ENCODE measurements at regions of chrX and their contacts with region 1.

Region 1: GRCh38 chrX:47836164-47837072 is at the start of gene ZNF81:
- DNase-seq: peak; percentile 94 to 95 (median 95)
- H3K4me3 ChIP-seq: peak within 1 kb of the TSS; percentile 71 to 79 (median 71)
- H3K4me3 Mint-ChIP-seq: peak within 1 kb of the TSS; percentile 98 to 99
- H3K27ac ChIP-seq: peak within 1 kb of the TSS; percentile 57 to 83
- H3K27ac Mint-ChIP-seq: peak within 1 kb of the TSS; percentile 88 to 95 (median 93)
- H3K4me1 ChIP-seq: peaks cover 7 to 20% of the 10 kb centered on the region in 2 donors
- H3K4me1 Mint-ChIP-seq: peaks cover 19% of the 10 kb centered on the region
- H3K27me3 ChIP-seq: no peaks in the 10 kb centered on the region
- H3K27me3 Mint-ChIP-seq: peaks cover 0 to 9% (median 0%) of the 10 kb centered on the region in 3 donors
- CTCF ChIP-seq: no peak
- polyA plus RNA-seq, gene ZNF81: 1.7 to 3.4 (median 2.4) TPM

Region 2: DNA sequence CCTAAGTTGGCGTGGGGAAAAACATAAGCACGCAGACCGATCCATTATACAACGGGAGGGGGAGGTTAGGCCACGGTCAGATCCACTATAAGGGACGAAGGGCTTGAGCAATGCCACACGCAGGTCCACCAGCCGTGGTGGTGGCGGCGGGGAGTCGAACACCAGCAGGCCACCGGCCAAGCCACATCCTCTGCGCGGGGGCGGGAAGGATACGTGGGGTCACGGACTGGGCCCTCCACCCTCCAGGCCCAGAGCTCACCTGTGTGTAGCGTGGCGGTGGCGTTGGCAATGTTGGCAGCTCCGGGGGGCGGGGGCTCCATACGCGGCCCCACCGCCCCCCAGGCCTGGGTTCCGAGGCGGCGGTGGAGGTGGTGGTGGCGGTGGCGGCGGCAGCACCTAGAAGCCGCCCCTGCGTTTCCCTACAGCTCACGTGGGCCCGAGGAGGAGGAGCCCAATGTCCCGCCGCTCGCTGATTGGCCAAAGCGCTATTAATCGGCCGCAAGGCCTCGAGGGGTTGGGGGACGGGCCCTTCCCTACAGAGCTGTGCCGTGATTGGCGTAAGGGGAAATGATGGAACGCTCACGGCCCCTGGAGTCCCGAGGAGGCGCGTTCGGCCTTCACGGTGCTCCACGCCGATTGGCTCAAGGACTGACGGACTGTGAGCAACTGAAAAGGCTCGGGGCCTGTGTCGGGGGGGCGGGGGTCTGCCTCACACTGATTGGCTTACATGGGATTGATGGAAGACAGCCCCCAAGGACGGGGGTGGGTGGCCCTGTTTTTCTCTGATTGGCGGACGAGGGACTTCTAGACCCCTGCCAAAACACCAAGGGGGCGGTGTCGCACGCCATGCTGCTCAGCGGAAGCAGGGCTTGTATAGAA is 186.0 kb before region 1 on chrX and contains the start of gene ELK1:
- intact Hi-C with region 1: loop called in 1 of 2 experiments (anchors 10 kb)
- DNase-seq: peak; percentile 90 to 93 (median 92)
- H3K4me3 ChIP-seq: peak within 1 kb of the TSS; percentile 55 to 80 (median 65)
- H3K4me3 Mint-ChIP-seq: peak within 1 kb of the TSS; percentile 83 to 92
- H3K27ac ChIP-seq: peak within 1 kb of the TSS; percentile 60 to 76
- H3K27ac Mint-ChIP-seq: peak within 1 kb of the TSS; percentile 88 to 95 (median 94)
- H3K4me1 ChIP-seq: peaks cover 23 to 27% of the 10 kb centered on the region in 2 donors
- H3K4me1 Mint-ChIP-seq: peaks cover 25% of the 10 kb centered on the region
- H3K27me3 ChIP-seq: no peaks in the 10 kb centered on the region
- H3K27me3 Mint-ChIP-seq: peaks cover 0 to 3% (median 2%) of the 10 kb centered on the region in 3 donors
- CTCF ChIP-seq: no peak
- polyA plus RNA-seq, gene ELK1: 9.5 to 11.9 (median 10.7) TPM

Region 3: GRCh38 chrX:47776292-47777006 is 60.0 kb before region 1 on chrX:
- intact Hi-C with region 1: no loop called
- DNase-seq: no peak
- H3K4me3 ChIP-seq: no peak overlapping the region
- H3K4me3 Mint-ChIP-seq: no peak overlapping the region
- H3K27ac ChIP-seq: no peak overlapping the region
- H3K27ac Mint-ChIP-seq: no peak overlapping the region
- H3K4me1 ChIP-seq: no peaks in the 10 kb centered on the region
- H3K4me1 Mint-ChIP-seq: no peaks in the 10 kb centered on the region
- H3K27me3 ChIP-seq: no peaks in the 10 kb centered on the region
- H3K27me3 Mint-ChIP-seq: peaks cover 0 to 6% (median 0%) of the 10 kb centered on the region in 3 donors
- CTCF ChIP-seq: no peak

Region 4: DNA sequence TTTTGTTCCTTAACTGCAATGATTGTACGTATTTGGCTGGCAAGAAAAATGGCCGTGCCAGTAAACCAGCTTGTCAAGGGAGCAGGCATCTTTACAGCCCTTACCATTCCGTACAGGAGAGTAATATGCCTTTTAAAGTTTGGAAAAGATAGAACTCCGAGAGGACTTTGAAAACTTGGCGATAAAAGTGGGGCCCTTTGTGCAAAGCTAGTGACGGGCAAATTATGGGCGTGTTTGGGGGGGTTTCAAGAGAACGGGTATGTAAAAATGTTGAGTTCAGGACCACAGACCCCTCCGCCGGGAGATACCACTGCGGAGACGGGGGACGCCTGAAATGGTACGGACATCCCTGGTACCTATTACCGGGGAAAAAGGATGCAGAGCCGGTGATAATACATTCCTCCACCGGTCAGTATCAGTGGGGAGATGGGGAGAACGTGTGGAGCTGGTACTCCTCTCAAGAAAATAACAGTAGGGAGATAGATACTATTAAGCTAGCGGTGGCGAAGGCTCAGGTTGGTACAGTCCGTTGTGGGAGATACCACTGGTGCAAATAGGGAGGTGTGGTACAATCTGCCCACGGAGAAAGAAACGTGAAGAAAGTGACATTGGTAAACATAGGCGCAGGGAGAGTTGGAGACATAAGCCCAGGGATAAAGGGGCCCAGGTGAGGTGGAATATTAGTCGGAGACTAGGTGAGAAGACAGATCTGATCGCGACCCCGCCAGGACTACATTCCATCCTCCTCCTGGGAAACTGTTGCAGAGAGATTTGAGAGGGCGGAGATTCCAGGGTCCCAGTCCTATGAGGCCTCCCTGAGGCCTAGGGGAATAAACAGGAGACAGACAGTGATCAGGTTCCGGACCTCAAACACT is 184.8 kb after region 1 on chrX:
- intact Hi-C with region 1: loop called (anchors 5 kb)
- DNase-seq: peak; percentile 53 to 79 (median 72)
- H3K4me3 ChIP-seq: peak overlapping the region; percentile 80 to 85 (median 83)
- H3K4me3 Mint-ChIP-seq: peak overlapping the region; percentile 82 to 91
- H3K27ac ChIP-seq: peak overlapping the region; percentile 66 to 94
- H3K27ac Mint-ChIP-seq: peak overlapping the region; percentile 91 to 99 (median 96)
- H3K4me1 ChIP-seq: peaks cover 15 to 16% of the 10 kb centered on the region in 2 donors
- H3K4me1 Mint-ChIP-seq: peaks cover 11% of the 10 kb centered on the region
- H3K27me3 ChIP-seq: no peaks in the 10 kb centered on the region
- H3K27me3 Mint-ChIP-seq: peaks cover 0 to 2% (median 0%) of the 10 kb centered on the region in 3 donors
- CTCF ChIP-seq: no peak